Activated CD4-positive, alpha-beta T cell treated with anti-CD3 and anti-CD28 coated beads, Interleukin-2, amount 10 ng/mL, durations not matched to agents 24 days and 14 days (primary cell): ENCODE measurements at regions of chr21 and their contacts with region 1.

Region 1: GRCh38 chr21:39313571-39314142 is at the start of gene BRWD1:
- DNase-seq: peak; percentile 94
- H3K4me3 Mint-ChIP-seq: peak within 1 kb of the TSS; percentile 97
- H3K27ac Mint-ChIP-seq: peak within 1 kb of the TSS; percentile 98
- H3K4me1 Mint-ChIP-seq: peaks cover 32% of the 10 kb centered on the region
- H3K27me3 Mint-ChIP-seq: no peaks in the 10 kb centered on the region
- total RNA-seq, gene BRWD1: 29.7 and 31.9 TPM in 2 replicates

Region 2: GRCh38 chr21:39379986-39380891 is 66.6 kb after region 1 on chr21:
- intact Hi-C with region 1: loop called (anchors 2 kb)
- DNase-seq: peak; percentile 98
- H3K4me3 Mint-ChIP-seq: peak overlapping the region; percentile 97
- H3K27ac Mint-ChIP-seq: peak overlapping the region; percentile 94
- H3K4me1 Mint-ChIP-seq: peaks cover 15% of the 10 kb centered on the region
- H3K27me3 Mint-ChIP-seq: no peaks in the 10 kb centered on the region

Region 3: GRCh38 chr21:39388038-39388810 is 74.6 kb after region 1 on chr21:
- intact Hi-C with region 1: loop called (anchors 1 kb)
- DNase-seq: peak; percentile 96
- H3K4me3 Mint-ChIP-seq: peak overlapping the region; percentile 87
- H3K27ac Mint-ChIP-seq: peak overlapping the region; percentile 91
- H3K4me1 Mint-ChIP-seq: peaks cover 20% of the 10 kb centered on the region
- H3K27me3 Mint-ChIP-seq: no peaks in the 10 kb centered on the region

Region 4: GRCh38 chr21:39445321-39446269 is 131.9 kb after region 1 on chr21 and contains the start of gene LCA5L:
- intact Hi-C with region 1: loop called (anchors 1 kb)
- DNase-seq: peak; percentile 98
- H3K4me3 Mint-ChIP-seq: peak within 1 kb of the TSS; percentile 84
- H3K27ac Mint-ChIP-seq: peak within 1 kb of the TSS; percentile 96
- H3K4me1 Mint-ChIP-seq: peaks cover 14% of the 10 kb centered on the region
- H3K27me3 Mint-ChIP-seq: peaks cover 47% of the 10 kb centered on the region
- total RNA-seq, gene LCA5L: not detected in 2 replicates